Activated CD4-positive, alpha-beta T cell treated with anti-CD3 and anti-CD28 coated beads, Interleukin-2, amount 10 ng/mL, durations not matched to agents 7 days and 5 days (primary cell): ENCODE measurements at regions of chr2 and their contacts with region 1.

Region 1: DNA sequence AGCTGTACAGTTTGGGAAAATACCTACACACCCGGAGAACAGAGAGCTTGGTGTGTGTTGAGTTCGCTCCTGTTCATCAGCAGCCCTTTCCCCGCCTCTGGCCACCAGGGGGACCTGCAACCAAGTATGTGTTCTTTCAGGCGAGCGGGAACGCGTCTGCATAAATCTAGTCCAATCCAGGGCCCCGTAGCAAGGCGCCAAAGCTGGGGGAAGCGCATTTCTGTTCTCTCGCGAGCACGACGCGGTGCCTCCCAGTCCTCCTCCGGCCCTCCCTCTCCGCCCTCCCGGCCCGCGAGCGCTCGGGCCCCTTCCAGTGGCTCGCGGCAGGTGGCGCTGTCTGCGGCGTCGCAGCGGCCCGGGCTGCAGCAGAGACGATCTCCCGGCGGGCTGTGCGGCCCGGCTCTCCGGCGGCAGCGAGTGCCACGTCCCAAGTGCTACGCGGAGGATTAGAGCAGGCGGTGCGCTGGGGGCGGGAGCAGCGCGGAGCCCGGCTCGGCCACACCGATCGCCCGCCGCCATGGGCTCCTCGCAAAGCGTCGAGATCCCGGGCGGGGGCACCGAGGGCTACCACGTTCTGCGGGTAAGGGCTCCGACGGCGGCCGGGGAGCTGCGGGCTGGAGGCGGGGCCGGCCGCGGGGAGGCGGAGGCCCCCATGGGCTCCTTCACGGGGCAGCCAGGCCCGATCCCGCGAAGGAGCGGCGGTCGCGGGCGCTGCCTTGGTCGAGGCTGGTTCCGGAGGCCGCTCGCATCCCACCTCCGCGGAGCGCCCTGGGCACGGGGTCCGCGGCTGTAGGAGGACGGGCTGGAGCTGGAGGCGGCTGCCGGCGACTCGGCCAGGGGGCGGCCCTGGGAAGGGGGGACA is at the start of gene GORASP2:
- DNase-seq: peak; percentile 99
- H3K4me3 Mint-ChIP-seq: peak within 1 kb of the TSS; percentile 86
- H3K27ac Mint-ChIP-seq: peak within 1 kb of the TSS; percentile 95
- H3K4me1 Mint-ChIP-seq: peaks cover 42% of the 10 kb centered on the region
- H3K27me3 Mint-ChIP-seq: no peaks in the 10 kb centered on the region
- total RNA-seq, gene GORASP2: 58.7 to 62.0 TPM

Region 2: DNA sequence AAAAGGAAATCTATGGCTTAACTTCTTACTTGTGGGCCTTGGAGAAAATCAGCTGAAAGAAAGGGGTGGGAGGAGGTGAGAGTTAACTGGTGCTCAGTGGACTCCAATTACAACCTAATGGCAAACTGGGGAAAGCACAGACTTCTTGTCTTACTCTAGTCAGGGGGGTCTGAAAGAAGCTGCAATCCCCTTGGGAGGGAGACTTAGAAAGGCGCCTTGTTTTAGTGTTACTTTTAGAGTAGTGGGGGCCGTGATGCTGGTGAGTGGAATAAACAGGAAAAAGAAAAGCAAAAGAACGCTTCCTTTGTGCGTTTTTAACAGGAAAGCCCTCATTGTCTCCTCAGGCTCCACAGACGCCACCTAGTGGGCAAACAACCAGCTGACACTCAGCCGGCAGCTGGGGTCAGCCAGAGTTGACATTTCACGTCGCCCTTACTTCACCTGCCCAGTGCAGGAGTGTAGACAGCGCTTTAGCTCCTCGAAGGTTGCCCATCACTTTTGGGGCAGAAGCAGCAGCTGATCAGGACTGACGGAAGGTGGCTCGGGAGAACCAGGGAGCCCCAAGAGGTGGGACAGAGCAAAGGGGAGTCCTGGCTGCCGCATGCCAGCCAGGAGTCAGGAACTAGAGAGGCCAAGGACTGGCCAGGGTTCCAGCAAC is 55.9 kb before region 1 on chr2:
- CTCF ChIA-PET with region 1: interaction called, 17 read pairs
- POLR2A ChIA-PET with region 1: interaction called, 4 read pairs
- DNase-seq: peak; percentile 85
- H3K4me3 Mint-ChIP-seq: peak overlapping the region; percentile 27
- H3K27ac Mint-ChIP-seq: peak overlapping the region; percentile 51
- H3K4me1 Mint-ChIP-seq: peaks cover 17% of the 10 kb centered on the region
- H3K27me3 Mint-ChIP-seq: no peaks in the 10 kb centered on the region

Region 3: DNA sequence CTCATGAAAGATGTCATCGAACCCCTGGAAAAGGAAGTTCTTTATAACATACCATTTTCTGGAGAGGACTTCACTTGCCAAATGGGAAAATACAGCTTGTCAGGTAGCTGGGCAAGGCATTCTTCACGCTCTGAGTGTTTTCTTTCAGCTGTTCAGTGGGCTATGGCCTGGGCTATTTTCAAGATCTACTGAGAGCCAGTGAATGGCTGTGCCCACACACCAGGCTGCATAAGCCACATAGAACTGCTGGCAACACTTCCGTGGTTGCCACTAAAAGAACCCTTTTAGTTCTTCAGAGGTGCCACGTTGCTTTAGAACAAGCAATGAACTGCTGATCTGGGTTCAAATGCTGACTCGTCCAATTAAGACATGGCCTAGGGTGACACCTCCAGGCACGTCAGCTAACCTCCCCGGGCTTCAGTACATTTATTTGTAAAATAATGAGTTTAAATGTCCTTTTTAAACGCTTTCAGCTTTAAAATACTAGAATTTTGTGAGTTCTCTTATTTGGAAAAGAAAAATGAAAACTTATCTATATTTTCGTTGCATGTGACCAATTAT is 36.6 kb before region 1 on chr2:
- CTCF ChIA-PET with region 1: interaction called, 11 read pairs
- POLR2A ChIA-PET with region 1: no interaction called
- DNase-seq: no peak
- H3K4me3 Mint-ChIP-seq: no peak overlapping the region
- H3K27ac Mint-ChIP-seq: no peak overlapping the region
- H3K4me1 Mint-ChIP-seq: no peaks in the 10 kb centered on the region
- H3K27me3 Mint-ChIP-seq: peaks cover 13% of the 10 kb centered on the region

Region 4: GRCh38 chr2:170940066-170940465 is 11.0 kb after region 1 on chr2:
- CTCF ChIA-PET with region 1: interaction called, 27 read pairs
- POLR2A ChIA-PET with region 1: interaction called, 5 read pairs
- DNase-seq: no peak
- H3K4me3 Mint-ChIP-seq: no peak overlapping the region
- H3K27ac Mint-ChIP-seq: no peak overlapping the region
- H3K4me1 Mint-ChIP-seq: peaks cover 35% of the 10 kb centered on the region
- H3K27me3 Mint-ChIP-seq: no peaks in the 10 kb centered on the region

Region 5: GRCh38 chr2:171008550-171009205 is 79.6 kb after region 1 on chr2:
- CTCF ChIA-PET with region 1: no interaction called
- POLR2A ChIA-PET with region 1: no interaction called
- DNase-seq: no peak
- H3K4me3 Mint-ChIP-seq: no peak overlapping the region
- H3K27ac Mint-ChIP-seq: no peak overlapping the region
- H3K4me1 Mint-ChIP-seq: no peaks in the 10 kb centered on the region
- H3K27me3 Mint-ChIP-seq: no peaks in the 10 kb centered on the region

Region 6: DNA sequence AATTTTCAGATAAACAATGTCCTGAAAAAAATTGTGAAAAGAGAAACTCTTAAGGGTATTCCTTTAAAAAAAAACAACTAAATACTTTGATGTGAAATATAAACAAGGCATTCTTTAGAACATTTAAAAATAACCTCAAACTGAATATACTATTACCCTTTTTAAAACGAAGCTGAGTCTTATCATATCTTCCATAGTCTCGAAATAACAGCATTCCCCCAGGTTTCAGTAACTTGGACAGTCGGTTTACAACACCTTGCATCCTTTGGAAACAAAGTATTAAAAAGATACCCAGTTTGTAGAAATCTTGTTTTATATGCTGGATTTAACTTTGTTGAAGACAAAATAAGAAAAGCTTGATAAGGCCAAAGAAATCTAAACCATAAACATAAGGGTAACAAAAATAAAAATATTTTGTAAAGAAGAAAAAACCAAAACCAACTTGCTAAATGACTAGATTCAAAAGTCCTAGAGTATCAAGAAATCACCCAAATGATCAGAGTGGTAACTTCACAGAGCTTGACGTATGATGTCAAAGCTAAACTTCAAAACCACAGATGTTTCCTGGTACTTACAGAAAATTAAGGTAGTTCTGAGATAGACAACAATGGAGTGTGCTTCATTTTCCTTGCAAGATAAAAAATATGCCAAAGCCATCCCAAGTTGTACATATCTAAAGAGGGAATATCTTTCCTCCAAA is 397.0 kb after region 1 on chr2:
- CTCF ChIA-PET with region 1: interaction called, 15 read pairs
- POLR2A ChIA-PET with region 1: interaction called, 3 read pairs
- DNase-seq: no peak
- H3K4me3 Mint-ChIP-seq: no peak overlapping the region
- H3K27ac Mint-ChIP-seq: peak overlapping the region; percentile 63
- H3K4me1 Mint-ChIP-seq: peaks cover 44% of the 10 kb centered on the region
- H3K27me3 Mint-ChIP-seq: no peaks in the 10 kb centered on the region